ENCODE measurements at regions of chr5 and their contacts with region 1.

Region 1: DNA sequence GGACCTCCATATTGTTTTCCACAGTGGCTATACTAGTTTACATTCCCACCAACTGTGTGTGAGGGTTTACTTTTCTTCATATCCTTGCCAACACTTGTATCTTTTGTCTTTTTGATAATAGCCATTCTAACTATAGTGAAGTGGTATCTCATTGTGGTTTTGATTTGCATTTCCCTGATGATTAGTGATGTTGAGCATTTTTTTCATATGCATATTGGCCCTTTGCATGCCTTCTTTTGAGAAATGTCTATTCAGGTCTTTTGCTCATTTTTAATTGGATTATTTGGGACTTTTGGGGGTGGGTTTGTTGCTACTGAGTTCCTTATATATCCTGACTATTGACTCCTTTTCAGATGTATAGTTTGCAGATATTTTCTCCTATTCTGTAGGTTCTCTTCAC is 44.4 kb downstream of the FEM1C start:
- DNase-seq: no peak
- H3K4me3 ChIP-seq: no peak overlapping the region
- H3K27ac ChIP-seq: no peak overlapping the region
- H3K4me1 ChIP-seq: no peaks in the 10 kb centered on the region
- H3K27me3 ChIP-seq: no peaks in the 10 kb centered on the region
- CTCF ChIP-seq: no peak
- EP300 ChIP-seq: no peak
- POLR2A ChIP-seq: no peak

Region 2: DNA sequence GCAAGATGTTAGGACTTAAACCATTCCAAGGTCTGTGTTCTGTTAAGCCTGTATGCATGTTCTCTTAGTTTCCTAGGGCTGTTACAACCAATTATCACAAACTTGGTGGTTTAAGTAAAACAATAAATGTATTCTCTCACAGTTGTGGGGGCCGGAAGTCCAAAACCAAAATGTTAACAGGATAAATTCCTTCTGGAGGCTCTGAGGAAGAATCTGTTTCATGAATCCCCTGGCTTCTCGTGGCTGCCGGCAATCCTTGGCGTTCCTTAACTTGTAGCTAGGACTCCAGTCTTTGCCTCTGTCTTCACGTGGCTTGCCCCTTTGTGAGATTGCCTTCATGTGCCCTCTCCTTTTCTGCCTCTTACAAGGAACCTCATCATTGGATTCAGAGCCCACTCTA is 14.0 kb after region 1 on chr5:
- in situ Hi-C with region 1: no loop called
- intact Hi-C with region 1: loop called (anchors 1 kb)
- DNase-seq: no peak
- H3K4me3 ChIP-seq: no peak overlapping the region
- H3K27ac ChIP-seq: no peak overlapping the region
- H3K4me1 ChIP-seq: no peaks in the 10 kb centered on the region
- H3K27me3 ChIP-seq: no peaks in the 10 kb centered on the region
- CTCF ChIP-seq: no peak
- EP300 ChIP-seq: no peak
- POLR2A ChIP-seq: no peak

Region 3: GRCh38 chr5:115798252-115798651 is 298.0 kb after region 1 on chr5:
- in situ Hi-C with region 1: no loop called
- intact Hi-C with region 1: no loop called
- DNase-seq: no peak
- H3K4me3 ChIP-seq: no peak overlapping the region
- H3K27ac ChIP-seq: no peak overlapping the region
- H3K4me1 ChIP-seq: no peaks in the 10 kb centered on the region
- H3K27me3 ChIP-seq: no peaks in the 10 kb centered on the region
- CTCF ChIP-seq: no peak
- EP300 ChIP-seq: no peak
- POLR2A ChIP-seq: no peak

Region 4: GRCh38 chr5:115992848-115993350 is 492.7 kb after region 1 on chr5:
- in situ Hi-C with region 1: no loop called
- intact Hi-C with region 1: no loop called
- DNase-seq: no peak
- H3K4me3 ChIP-seq: no peak overlapping the region
- H3K27ac ChIP-seq: no peak overlapping the region
- H3K4me1 ChIP-seq: no peaks in the 10 kb centered on the region
- H3K27me3 ChIP-seq: no peaks in the 10 kb centered on the region
- CTCF ChIP-seq: no peak
- EP300 ChIP-seq: no peak
- POLR2A ChIP-seq: no peak

Measured in transverse colon (tissue), 4 donors.